Posterior cingulate gyrus (tissue), 11 donors: ENCODE measurements at regions of chr11 and their contacts with region 1.

Region 1: GRCh38 chr11:130213143-130213978 is 53.8 kb downstream of the ST14 start:
- DNase-seq: peak; percentile 45 to 96 (median 75)

Region 2: DNA sequence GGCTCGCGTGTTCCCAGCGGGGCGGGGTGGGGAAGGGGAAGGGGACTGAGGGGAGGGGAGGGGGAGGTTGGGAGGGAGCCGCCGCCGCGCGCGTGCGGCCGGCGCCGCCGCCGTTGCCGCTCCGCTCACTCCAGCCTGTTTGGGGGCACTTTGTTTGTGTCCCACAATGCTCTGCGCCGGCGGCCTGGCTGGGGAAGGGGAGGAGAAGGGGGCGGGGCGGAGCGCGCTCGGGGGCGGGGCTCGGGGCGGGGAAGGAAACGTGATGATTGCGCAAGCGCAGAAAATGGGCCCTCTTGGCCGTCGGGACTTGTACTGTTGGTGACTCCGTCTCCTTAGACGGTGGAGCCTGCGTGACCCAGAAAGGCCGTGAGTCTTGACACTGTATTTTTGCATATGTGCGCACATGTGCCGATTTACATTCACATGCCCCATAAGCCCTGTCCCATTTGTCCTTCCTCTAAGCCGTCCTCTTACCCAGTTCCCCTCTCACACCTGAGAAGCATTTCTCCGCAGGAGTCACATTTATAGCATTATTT is 101.5 kb after region 1 on chr11 and contains the start of gene ZBTB44:
- intact Hi-C with region 1: loop called (anchors 10 kb)
- DNase-seq: peak; percentile 89 to 99 (median 94)

Region 3: GRCh38 chr11:130370845-130371590 is 157.7 kb after region 1 on chr11:
- intact Hi-C with region 1: loop called (anchors 10 kb)
- DNase-seq: no peak

Region 4: DNA sequence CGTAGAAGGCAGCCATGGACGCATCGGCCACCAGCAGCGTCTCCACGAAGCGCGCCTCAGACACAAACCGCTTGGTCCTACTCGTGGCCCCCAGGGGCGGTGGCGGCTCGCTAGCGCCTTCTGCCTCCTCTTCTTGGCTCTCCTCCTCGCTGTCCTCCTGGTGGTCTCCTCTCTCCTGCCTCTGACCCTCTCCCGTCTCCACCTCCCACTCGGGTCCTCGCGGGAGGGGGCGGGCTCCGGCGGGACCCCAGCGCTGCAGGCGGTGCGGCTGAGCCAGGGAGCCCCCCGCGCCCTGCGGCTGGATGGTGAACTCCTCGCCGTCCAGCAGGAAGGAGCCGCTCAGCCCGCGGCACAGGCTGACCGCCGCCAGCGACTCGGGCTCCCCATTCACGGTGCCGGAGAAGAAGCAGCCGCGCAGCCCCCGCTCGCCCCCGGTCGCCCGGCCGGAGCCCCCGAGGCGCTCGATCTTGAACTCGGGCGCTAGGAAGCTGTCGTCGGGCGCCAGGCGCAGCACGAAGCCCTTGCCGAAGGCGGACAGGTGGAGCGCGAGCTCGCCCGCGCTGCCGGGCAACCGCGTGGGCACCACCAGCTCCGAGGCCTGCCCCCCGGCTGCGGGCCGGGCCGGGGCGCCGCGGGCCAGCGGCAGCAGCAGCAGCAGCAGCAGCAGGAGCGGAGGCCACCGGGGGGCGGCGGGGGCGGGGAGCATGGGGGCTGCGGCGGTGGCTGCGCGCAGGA is 214.4 kb after region 1 on chr11:
- intact Hi-C with region 1: loop called (anchors 1 kb)
- DNase-seq: peak in 6 of 10 donors; percentile 62 to 95 (median 80)

Region 5: GRCh38 chr11:130434521-130435223 is 221.3 kb after region 1 on chr11:
- intact Hi-C with region 1: loop called (anchors 1 kb)
- DNase-seq: peak; percentile 67 to 97 (median 79)

Region 6: GRCh38 chr11:130861902-130862860 is 648.8 kb after region 1 on chr11:
- intact Hi-C with region 1: loop called (anchors 5 kb)
- DNase-seq: peak; percentile 82 to 98 (median 92)